Natural killer cell (primary cell): ENCODE measurements at regions of chr12 and their contacts with region 1.

Region 1: GRCh38 chr12:107027636-107028053 is 40.7 kb upstream of the MTERF2 start:
- DNase-seq: peak in 1 of 2 donors; percentile 86
- ATAC-seq: peak; percentile 78 to 91 (median 89)
- H3K4me3 ChIP-seq: peak overlapping the region; percentile 10
- H3K4me3 Mint-ChIP-seq: peak overlapping the region; percentile 90
- H3K27ac ChIP-seq: peak overlapping the region; percentile 97
- H3K27ac Mint-ChIP-seq: peak overlapping the region; percentile 96 to 100
- H3K4me1 ChIP-seq: peaks cover 3% of the 10 kb centered on the region
- H3K4me1 Mint-ChIP-seq: peaks cover 50 to 78% of the 10 kb centered on the region in 2 donors
- H3K27me3 ChIP-seq: no peaks in the 10 kb centered on the region
- H3K27me3 Mint-ChIP-seq: no peaks in the 10 kb centered on the region
- CTCF ChIP-seq: no peak

Region 2: GRCh38 chr12:106955377-106956047 is 72.1 kb before region 1 on chr12 and contains the start of gene TMEM263:
- intact Hi-C with region 1: loop called (anchors 1 kb)
- DNase-seq: peak; percentile 90 to 97
- ATAC-seq: peak; percentile 81 to 94 (median 86)
- H3K4me3 ChIP-seq: peak within 1 kb of the TSS; percentile 88
- H3K4me3 Mint-ChIP-seq: peak within 1 kb of the TSS; percentile 98
- H3K27ac ChIP-seq: peak within 1 kb of the TSS; percentile 92
- H3K27ac Mint-ChIP-seq: peak within 1 kb of the TSS; percentile 89 to 98
- H3K4me1 ChIP-seq: peaks cover 18% of the 10 kb centered on the region
- H3K4me1 Mint-ChIP-seq: peaks cover 27 to 31% of the 10 kb centered on the region in 2 donors
- H3K27me3 ChIP-seq: no peaks in the 10 kb centered on the region
- H3K27me3 Mint-ChIP-seq: no peaks in the 10 kb centered on the region
- CTCF ChIP-seq: no peak
- total RNA-seq, gene TMEM263: 24.1 to 37.5 (median 34.4) TPM

Region 3: GRCh38 chr12:107179871-107180270 is 152.2 kb after region 1 on chr12:
- intact Hi-C with region 1: loop called (anchors 2 kb)
- DNase-seq: no peak
- ATAC-seq: no peak
- H3K4me3 ChIP-seq: no peak overlapping the region
- H3K4me3 Mint-ChIP-seq: peak overlapping the region; percentile 2
- H3K27ac ChIP-seq: no peak overlapping the region
- H3K27ac Mint-ChIP-seq: peak overlapping the region; percentile 85 to 98
- H3K4me1 ChIP-seq: peaks cover 19% of the 10 kb centered on the region
- H3K4me1 Mint-ChIP-seq: peaks cover 23 to 32% of the 10 kb centered on the region in 2 donors
- H3K27me3 ChIP-seq: no peaks in the 10 kb centered on the region
- H3K27me3 Mint-ChIP-seq: peaks cover 0 to 2% of the 10 kb centered on the region in 2 donors
- CTCF ChIP-seq: no peak